Dorsolateral prefrontal cortex (tissue), 120 donors: ENCODE measurements at regions of chr6 and their contacts with region 1.

Region 1: DNA sequence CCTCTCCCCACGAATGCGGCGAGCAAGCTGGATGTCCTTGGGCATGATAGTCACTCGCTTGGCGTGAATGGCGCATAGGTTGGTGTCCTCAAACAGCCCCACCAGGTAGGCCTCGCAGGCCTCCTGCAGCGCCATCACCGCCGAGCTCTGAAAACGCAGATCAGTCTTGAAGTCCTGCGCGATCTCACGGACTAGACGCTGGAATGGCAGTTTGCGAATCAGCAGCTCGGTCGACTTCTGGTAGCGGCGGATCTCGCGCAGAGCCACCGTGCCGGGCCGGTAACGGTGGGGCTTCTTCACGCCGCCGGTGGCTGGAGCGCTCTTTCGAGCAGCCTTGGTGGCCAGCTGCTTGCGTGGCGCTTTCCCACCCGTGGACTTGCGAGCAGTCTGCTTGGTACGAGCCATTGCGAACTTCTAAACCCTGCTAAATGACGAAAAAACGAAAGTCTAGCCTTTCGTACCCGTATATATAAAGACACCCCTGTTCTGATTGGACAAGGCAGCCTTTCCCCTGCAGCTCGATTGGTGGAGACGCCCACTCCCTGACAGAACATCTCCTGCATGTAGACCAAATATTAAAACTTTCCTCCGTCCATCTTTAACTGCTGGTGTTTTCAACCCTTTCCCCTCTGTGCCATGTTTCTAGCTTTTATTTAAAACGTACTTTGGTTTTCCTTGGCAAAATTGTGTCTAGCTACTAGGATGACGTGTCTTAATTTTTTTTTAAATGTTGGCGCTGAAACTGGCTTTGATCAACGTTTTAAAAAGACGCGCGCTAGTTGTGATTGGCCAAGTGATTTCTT is 109.8 kb downstream of the HFE start:
- DNase-seq: peak in 9 of 10 donors; percentile 61 to 85 (median 80)
- H3K4me3 ChIP-seq: peak overlapping the region; percentile 52 to 86 (median 74)
- H3K27ac ChIP-seq: peak overlapping the region in 57 of 59 donors; percentile 21 to 93 (median 80)
- H3K27me3 ChIP-seq: peaks cover 0 to 18% (median 0%) of the 10 kb centered on the region in 45 donors
- CTCF ChIP-seq: peak in 7 of 56 donors; percentile 4 to 26 (median 19)

Region 2: GRCh38 chr6:26054857-26055669 is 142.0 kb before region 1 on chr6:
- intact Hi-C with region 1: loop called in 1 of 2 experiments (anchors 10 kb)
- DNase-seq: peak; percentile 65 to 96 (median 88)
- H3K4me3 ChIP-seq: peak overlapping the region; percentile 55 to 99 (median 81)
- H3K27ac ChIP-seq: peak overlapping the region; percentile 10 to 98 (median 91)
- H3K27me3 ChIP-seq: no peaks in the 10 kb centered on the region
- CTCF ChIP-seq: peak in 40 of 56 donors; percentile 6 to 56 (median 35)

Region 3: DNA sequence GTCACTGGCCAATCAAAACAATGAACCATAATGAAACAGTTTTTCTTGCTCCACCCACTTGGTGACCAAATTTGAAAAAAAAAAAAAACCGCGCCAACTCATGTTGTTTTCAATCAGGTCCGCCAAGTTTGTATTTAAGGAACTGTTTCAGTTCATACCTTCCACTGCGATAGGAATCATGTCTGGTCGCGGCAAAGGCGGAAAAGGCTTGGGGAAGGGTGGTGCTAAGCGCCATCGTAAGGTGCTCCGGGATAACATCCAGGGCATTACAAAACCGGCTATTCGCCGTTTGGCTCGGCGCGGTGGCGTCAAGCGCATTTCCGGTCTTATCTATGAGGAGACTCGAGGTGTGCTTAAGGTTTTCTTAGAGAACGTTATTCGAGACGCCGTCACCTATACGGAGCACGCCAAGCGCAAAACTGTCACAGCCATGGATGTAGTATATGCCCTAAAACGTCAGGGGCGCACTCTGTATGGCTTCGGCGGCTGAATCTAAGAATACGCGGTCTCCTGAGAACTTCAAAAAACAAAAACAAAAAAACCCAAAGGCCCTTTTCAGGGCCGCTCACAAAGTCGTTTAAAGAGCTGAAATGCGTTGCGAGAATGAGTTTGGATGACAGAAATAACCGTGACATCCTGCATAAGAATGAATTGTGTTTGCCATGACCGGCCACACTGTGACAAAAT is 93.1 kb before region 1 on chr6:
- intact Hi-C with region 1: loop called in 1 of 2 experiments (anchors 5 kb)
- DNase-seq: peak; percentile 69 to 93 (median 87)
- H3K4me3 ChIP-seq: peak overlapping the region; percentile 41 to 86 (median 70)
- H3K27ac ChIP-seq: peak overlapping the region in 58 of 59 donors; percentile 24 to 94 (median 84)
- H3K27me3 ChIP-seq: no peaks in the 10 kb centered on the region
- CTCF ChIP-seq: peak in 44 of 56 donors; percentile 14 to 54 (median 32)